ENCODE measurements at regions of chr15 and their contacts with region 1.

Region 1: DNA sequence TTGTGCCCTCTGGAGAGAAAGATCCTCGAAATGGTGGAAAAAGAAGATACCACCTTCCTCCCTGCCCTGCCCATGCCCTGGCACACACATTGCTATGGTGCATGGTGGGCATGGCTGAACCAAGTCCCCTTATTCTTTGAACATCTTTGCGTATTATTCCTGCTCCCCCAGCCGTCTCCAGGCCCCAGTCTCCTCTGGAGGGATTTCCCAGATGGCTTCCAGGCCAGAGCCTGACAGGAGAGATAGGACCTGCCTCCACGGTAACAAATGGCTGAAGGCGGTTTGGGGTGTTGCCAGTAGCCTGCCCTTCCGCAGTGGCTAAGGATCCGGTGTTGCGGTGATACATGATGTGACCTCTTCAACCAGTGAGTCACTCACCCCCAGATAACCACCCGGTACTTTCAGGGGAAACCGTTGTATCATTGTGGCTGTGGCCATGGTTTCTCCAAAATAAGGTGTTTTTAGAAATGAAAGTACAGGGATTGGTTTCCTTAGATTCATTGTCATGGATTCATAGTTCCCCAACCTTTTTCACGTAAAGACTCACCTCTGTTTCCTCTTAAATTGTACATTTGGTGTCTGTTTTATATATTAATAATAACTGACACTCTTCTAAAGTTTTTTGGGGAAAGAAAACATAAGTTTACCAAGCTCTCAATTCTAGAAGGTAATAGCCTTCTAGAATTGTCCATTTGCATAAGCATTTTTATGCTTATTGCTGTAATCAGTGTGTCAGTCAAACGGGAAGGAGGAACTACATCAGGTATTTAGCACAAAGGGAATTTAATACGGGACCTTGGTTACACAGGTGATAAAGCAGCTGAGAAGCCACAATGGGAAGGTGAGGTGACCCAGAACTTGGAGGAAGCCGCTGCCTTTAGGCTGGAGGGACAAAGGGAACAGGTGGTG is 25.9 kb downstream of the SMAD3 start:
- DNase-seq: no peak
- H3K4me3 ChIP-seq: peak overlapping the region in 2 of 4 experiments; percentile 3 to 20; a peak in 2 of 8 replicates
- H3K27ac ChIP-seq: no peak overlapping the region
- H3K4me1 ChIP-seq: peaks cover 7 to 28% (median 16%) of the 10 kb centered on the region in 4 experiments
- H3K27me3 ChIP-seq: no peaks in the 10 kb centered on the region
- CTCF ChIP-seq: no peak
- EP300 ChIP-seq: no peak
- POLR2A ChIP-seq: no peak
- RAD21 ChIP-seq: no peak

Region 2: GRCh38 chr15:67013696-67014095 is 77.6 kb before region 1 on chr15:
- CTCF ChIA-PET with region 1: no interaction called
- POLR2A ChIA-PET with region 1: no interaction called
- DNase-seq: peak in 1 of 2 experiments; percentile 57
- H3K4me3 ChIP-seq: no peak overlapping the region
- H3K27ac ChIP-seq: no peak overlapping the region
- H3K4me1 ChIP-seq: peaks cover 5 to 20% (median 11%) of the 10 kb centered on the region in 4 experiments
- H3K27me3 ChIP-seq: no peaks in the 10 kb centered on the region
- CTCF ChIP-seq: no peak
- EP300 ChIP-seq: no peak
- POLR2A ChIP-seq: 0 out of 3 replicates have a peak, but pooled peaks of 1 of the 2 experiments have one; percentile 31
- RAD21 ChIP-seq: no peak

Region 3: GRCh38 chr15:67070892-67071664 is 20.2 kb before region 1 on chr15:
- CTCF ChIA-PET with region 1: interaction called, 13 read pairs
- POLR2A ChIA-PET with region 1: interaction called, 4 read pairs
- DNase-seq: no peak
- H3K4me3 ChIP-seq: no peak overlapping the region
- H3K27ac ChIP-seq: no peak overlapping the region
- H3K4me1 ChIP-seq: peaks cover 6 to 23% (median 9%) of the 10 kb centered on the region in 4 experiments
- H3K27me3 ChIP-seq: peaks cover 0 to 23% (median 15%) of the 10 kb centered on the region in 4 experiments; a peak in 5 of 7 replicates
- CTCF ChIP-seq: no peak
- EP300 ChIP-seq: no peak
- POLR2A ChIP-seq: no peak
- RAD21 ChIP-seq: no peak

Region 4: DNA sequence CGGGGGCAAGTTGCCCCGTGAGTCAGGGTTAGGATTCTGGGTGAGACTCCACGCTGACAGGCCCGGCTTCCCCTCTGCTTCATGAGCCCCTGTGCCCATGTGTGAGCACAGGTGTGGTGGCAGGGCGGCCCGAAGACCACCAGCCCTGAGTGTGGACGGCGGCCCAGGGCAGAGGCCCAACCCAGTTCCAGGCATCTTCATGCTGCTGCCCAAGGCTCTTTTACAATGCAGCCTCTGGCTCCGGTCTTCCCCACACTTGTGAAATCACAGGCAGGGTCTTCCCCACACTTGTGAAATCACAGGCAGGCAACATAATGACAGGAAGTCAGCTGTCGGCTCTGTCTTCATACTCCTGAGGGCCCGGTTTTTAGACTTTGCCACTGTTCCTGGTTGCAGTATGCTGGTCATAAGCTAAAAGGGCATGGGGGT is 84.3 kb after region 1 on chr15:
- CTCF ChIA-PET with region 1: no interaction called
- POLR2A ChIA-PET with region 1: no interaction called
- DNase-seq: no peak
- H3K4me3 ChIP-seq: no peak overlapping the region
- H3K27ac ChIP-seq: no peak overlapping the region
- H3K4me1 ChIP-seq: peaks cover 4 to 23% (median 11%) of the 10 kb centered on the region in 4 experiments
- H3K27me3 ChIP-seq: no peaks in the 10 kb centered on the region
- CTCF ChIP-seq: no peak
- EP300 ChIP-seq: no peak
- POLR2A ChIP-seq: no peak
- RAD21 ChIP-seq: no peak

Region 5: DNA sequence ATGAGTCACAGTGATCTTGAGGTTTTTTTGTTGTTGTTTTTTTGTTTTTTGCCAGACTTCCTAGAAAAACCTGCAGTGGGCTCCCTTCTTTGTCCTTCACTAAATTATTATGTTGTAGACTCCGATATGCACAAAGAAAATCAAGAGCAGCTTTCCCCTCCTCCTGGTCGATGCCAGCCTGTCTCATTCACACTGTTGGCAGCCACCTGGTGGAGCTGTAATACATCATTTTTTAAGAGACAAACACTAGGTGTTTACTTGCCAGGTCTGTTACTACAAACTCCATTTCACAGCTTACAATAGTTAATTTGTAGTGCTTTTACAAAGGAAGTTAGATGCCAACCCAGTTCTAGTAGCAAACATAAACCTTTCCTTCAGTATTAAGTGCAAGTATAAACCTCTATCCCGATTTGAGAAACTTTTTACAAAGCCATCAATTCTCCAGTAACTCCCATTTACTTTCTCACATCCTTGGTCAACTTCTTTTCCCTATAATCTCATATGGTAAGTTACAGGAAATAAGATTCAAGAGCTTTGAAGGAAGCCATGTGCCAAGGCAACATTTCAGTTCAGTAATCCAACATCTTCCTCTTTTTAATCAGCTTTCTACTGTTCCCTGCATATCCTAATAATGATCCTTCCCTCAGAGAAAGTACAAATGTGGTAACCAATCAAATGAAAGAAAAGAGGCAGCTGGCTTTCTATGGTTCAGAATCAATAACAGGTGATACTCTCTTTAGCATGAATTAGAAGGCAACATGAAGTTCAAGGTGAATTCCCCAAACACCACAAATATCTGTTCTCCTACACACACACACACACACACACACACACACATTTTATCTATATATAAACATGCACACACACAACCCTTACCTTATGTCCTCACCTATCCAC is 149.2 kb after region 1 on chr15:
- CTCF ChIA-PET with region 1: no interaction called
- POLR2A ChIA-PET with region 1: no interaction called
- DNase-seq: no peak
- H3K4me3 ChIP-seq: no peak overlapping the region
- H3K27ac ChIP-seq: no peak overlapping the region
- H3K4me1 ChIP-seq: peaks cover 0 to 8% (median 3%) of the 10 kb centered on the region in 4 experiments; a peak in 4 of 7 replicates
- H3K27me3 ChIP-seq: no peaks in the 10 kb centered on the region
- CTCF ChIP-seq: peak; percentile 42 to 52 (median 51)
- EP300 ChIP-seq: no peak
- POLR2A ChIP-seq: no peak
- RAD21 ChIP-seq: peak; percentile 58 to 74

Region 6: DNA sequence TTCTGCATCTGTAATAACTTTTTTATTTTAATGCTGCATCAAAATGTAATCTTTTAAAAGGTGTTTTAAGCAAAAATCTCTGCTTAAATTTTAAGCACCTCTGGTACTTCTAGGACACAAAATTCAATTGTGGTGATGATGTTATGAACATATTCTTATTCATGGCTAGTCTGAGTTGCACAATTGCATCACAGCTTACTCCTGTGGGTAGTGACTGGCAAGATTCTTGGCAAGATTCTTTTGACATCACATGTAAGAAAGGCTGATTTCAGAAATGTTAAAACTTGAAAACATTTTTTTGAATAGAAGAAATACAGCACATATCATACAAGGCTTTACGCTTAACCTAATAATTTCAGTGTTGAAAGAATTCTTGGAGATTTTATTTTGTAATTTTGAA is 199.0 kb after region 1 on chr15:
- CTCF ChIA-PET with region 1: no interaction called
- POLR2A ChIA-PET with region 1: no interaction called
- DNase-seq: no peak
- H3K4me3 ChIP-seq: no peak overlapping the region
- H3K27ac ChIP-seq: no peak overlapping the region
- H3K4me1 ChIP-seq: no peaks in the 10 kb centered on the region
- H3K27me3 ChIP-seq: no peaks in the 10 kb centered on the region
- CTCF ChIP-seq: no peak
- EP300 ChIP-seq: no peak
- POLR2A ChIP-seq: no peak
- RAD21 ChIP-seq: no peak

Measured in H1 (cell line).